ENCODE measurements at regions of chr4 and their contacts with region 1.

Region 1: DNA sequence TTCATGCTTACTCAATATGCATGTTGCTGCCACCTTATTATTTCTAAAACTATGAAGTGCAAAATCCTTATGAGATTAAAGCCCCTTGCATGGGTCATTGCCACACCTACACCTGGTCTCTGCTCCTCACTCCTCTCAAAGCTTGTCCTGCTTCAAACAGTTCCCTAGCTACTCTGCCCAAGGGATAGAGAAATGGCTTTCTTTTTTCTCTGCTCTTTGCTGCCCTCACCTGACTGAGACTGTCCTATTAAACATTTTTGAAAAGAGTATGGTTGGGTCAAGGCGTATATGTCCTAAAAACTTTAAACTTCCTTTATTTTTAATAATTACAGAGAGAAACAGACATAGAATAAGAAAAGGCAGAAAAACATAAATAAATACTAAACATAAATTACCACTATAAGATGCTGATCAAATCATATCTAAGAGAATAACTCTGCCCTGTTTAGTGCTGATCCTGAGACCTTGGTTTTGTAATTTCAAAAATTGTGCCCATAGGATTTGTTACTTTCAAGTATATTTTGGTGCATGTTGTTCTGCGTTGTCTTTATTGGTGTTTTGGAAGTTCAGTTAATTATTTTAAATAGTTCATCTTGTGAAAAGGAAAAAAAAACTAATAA is 704.9 kb upstream of the PABPC4L start:
- DNase-seq: peak; percentile 43
- H3K4me3 Mint-ChIP-seq: no peak overlapping the region
- H3K27ac Mint-ChIP-seq: no peak overlapping the region
- H3K4me1 Mint-ChIP-seq: peaks cover 6% of the 10 kb centered on the region
- H3K27me3 Mint-ChIP-seq: no peaks in the 10 kb centered on the region
- CTCF ChIP-seq: peak; percentile 42

Region 2: DNA sequence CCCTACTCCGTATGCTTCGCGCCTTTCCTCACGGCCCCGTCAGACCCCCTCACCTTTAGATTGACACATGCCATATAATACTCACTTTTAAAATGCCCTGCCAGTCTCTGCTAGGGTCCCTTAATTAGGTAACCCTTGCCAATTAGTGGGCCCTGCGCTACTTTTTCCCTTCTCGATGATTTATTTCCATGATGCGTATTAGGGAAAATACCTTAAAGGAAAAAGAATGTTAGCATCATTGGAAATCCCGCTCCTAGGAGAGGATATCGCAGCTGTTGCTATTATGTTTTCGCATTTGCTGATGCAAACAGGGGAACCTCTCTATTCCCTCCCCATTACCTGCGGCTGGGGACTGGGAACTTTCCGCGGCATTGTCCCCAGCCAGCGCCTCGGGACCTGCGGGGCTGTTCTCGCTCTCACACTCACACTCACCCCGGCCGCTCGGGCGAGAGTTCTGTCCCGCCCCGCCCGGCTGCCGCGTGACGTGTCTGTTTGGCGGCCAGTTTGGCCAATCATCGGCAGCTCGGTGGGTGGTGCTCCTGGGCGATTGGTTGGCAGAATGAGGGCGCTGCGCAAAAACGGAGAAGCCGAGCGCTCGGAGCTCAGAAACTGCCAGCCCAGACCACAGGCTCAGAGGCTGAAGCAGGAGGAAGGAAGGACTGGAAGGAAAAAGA is 1757.7 kb before region 1 on chr4 and contains the start of gene PCDH10:
- CTCF ChIA-PET with region 1: interaction called, 4 read pairs
- POLR2A ChIA-PET with region 1: interaction called, 3 read pairs
- intact Hi-C with region 1: loop called (anchors 2 kb)
- DNase-seq: no peak
- H3K4me3 Mint-ChIP-seq: no peak within 1 kb of the TSS
- H3K27ac Mint-ChIP-seq: no peak within 1 kb of the TSS
- H3K4me1 Mint-ChIP-seq: peaks cover 10% of the 10 kb centered on the region
- H3K27me3 Mint-ChIP-seq: peaks cover 45% of the 10 kb centered on the region
- CTCF ChIP-seq: no peak
- total RNA-seq, gene PCDH10: not detected in 2 replicates

Region 3: GRCh38 chr4:133154725-133155124 is 1751.8 kb before region 1 on chr4:
- CTCF ChIA-PET with region 1: interaction called, 5 read pairs
- POLR2A ChIA-PET with region 1: no interaction called
- intact Hi-C with region 1: loop called (anchors 2 kb)
- DNase-seq: peak; percentile 31
- H3K4me3 Mint-ChIP-seq: no peak overlapping the region
- H3K27ac Mint-ChIP-seq: no peak overlapping the region
- H3K4me1 Mint-ChIP-seq: peaks cover 5% of the 10 kb centered on the region
- H3K27me3 Mint-ChIP-seq: peaks cover 23% of the 10 kb centered on the region
- CTCF ChIP-seq: peak; percentile 51

Region 4: DNA sequence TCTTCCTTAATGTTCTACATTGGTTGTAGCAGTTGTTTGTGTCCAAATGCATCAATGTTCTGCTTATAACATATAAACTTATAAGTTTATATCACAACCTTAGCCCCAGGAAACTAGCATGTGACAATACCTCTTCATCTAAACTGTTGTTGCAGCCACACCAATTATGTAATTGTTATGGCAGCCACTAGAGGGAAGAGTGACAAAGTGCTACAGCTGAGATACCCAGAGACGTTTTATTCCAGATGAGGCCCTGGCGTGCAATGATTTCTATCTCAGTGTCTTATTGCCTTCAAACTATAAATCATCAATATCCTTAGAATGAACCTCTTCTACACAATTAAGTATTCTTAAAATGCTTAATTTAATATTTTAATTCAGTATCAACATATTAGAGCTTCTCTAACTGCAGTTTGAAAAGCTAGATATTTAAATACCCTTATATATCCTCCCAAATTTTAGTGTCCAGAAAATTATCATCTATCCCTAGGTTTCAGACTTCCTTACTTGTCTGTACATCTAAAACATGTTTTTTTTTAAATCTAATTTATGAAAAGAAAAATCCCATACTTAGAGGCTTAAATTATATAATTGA is 1585.8 kb before region 1 on chr4:
- CTCF ChIA-PET with region 1: no interaction called
- POLR2A ChIA-PET with region 1: no interaction called
- intact Hi-C with region 1: loop called (anchors 2 kb)
- DNase-seq: peak; percentile 51
- H3K4me3 Mint-ChIP-seq: no peak overlapping the region
- H3K27ac Mint-ChIP-seq: no peak overlapping the region
- H3K4me1 Mint-ChIP-seq: peaks cover 5% of the 10 kb centered on the region
- H3K27me3 Mint-ChIP-seq: peaks cover 38% of the 10 kb centered on the region
- CTCF ChIP-seq: peak; percentile 47

Region 5: GRCh38 chr4:134024251-134024650 is 882.3 kb before region 1 on chr4:
- CTCF ChIA-PET with region 1: no interaction called
- POLR2A ChIA-PET with region 1: no interaction called
- intact Hi-C with region 1: loop called (anchors 10 kb)
- DNase-seq: peak; percentile 38
- H3K4me3 Mint-ChIP-seq: no peak overlapping the region
- H3K27ac Mint-ChIP-seq: no peak overlapping the region
- H3K4me1 Mint-ChIP-seq: peaks cover 12% of the 10 kb centered on the region
- H3K27me3 Mint-ChIP-seq: no peaks in the 10 kb centered on the region
- CTCF ChIP-seq: no peak

Region 6: GRCh38 chr4:134883831-134884449 is 22.6 kb before region 1 on chr4:
- CTCF ChIA-PET with region 1: no interaction called
- POLR2A ChIA-PET with region 1: no interaction called
- intact Hi-C with region 1: no loop called
- DNase-seq: no peak
- H3K4me3 Mint-ChIP-seq: no peak overlapping the region
- H3K27ac Mint-ChIP-seq: no peak overlapping the region
- H3K4me1 Mint-ChIP-seq: no peaks in the 10 kb centered on the region
- H3K27me3 Mint-ChIP-seq: no peaks in the 10 kb centered on the region
- CTCF ChIP-seq: no peak

Region 7: GRCh38 chr4:135724426-135724825 is 817.9 kb after region 1 on chr4:
- CTCF ChIA-PET with region 1: no interaction called
- POLR2A ChIA-PET with region 1: no interaction called
- intact Hi-C with region 1: loop called (anchors 10 kb)
- DNase-seq: no peak
- H3K4me3 Mint-ChIP-seq: no peak overlapping the region
- H3K27ac Mint-ChIP-seq: no peak overlapping the region
- H3K4me1 Mint-ChIP-seq: no peaks in the 10 kb centered on the region
- H3K27me3 Mint-ChIP-seq: no peaks in the 10 kb centered on the region
- CTCF ChIP-seq: no peak

Measured in MCF 10A (cell line).